ENCODE measurements at regions of chr19 and their contacts with region 1.

Region 1: DNA sequence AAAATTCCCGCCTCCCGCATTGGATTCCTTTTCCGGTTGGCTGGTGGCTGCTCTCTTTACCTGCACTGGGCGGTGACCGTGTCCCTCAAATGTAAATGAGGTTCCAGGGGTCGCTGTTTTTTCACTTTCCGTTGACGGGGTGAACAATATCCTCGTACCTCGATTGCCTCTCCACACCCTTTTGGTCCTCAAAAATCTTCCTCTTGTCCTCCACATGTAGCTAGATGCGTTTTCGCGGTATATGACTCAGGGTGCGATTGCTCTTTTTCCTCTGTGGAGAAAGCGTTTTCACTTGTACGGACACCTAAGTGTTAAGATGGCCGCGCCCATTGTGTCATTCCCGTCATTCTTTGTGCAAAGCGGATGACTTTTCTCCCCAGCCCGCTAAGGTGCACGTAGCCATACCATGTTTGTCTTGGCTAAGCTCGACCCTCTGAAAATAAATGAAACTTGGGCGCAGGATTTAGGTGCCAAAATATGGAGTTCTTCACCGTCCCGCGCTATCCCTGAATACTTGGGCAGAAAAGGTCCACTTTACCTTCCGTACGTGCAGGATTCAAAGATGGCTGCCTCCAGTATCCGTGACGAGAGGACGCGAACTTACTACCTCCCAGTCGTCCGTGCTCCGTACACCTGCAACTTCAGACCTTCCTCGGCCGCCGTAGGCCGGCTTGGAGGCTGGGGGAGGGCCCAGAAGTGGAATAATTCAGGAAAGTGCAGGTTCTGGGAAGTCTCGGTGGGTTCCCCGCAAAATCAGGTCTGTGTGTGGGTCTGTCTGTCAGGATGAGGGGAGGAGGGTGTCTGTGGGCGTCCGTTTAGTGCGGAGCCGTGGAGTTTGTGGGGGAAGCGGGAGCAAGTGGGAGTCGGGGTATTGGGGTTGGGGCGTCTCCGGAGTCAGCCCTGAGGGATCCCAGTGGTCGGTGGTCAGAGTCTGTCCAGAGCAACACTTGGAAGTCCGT is at the start of gene ZNF613:
- DNase-seq: peak; percentile 94
- ATAC-seq: peak; percentile 90
- H3K4me3 ChIP-seq: peak within 1 kb of the TSS; percentile 84
- H3K27ac ChIP-seq: peak within 1 kb of the TSS; percentile 12; the same call in 1 of the 2 replicates
- H3K4me1 ChIP-seq: peaks cover 6% of the 10 kb centered on the region; the same call in 1 of the 2 replicates
- H3K27me3 ChIP-seq: no peaks in the 10 kb centered on the region
- CTCF ChIP-seq: peak; percentile 53
- total RNA-seq, gene ZNF613: 3.1 and 4.3 TPM in 2 replicates

Region 2: DNA sequence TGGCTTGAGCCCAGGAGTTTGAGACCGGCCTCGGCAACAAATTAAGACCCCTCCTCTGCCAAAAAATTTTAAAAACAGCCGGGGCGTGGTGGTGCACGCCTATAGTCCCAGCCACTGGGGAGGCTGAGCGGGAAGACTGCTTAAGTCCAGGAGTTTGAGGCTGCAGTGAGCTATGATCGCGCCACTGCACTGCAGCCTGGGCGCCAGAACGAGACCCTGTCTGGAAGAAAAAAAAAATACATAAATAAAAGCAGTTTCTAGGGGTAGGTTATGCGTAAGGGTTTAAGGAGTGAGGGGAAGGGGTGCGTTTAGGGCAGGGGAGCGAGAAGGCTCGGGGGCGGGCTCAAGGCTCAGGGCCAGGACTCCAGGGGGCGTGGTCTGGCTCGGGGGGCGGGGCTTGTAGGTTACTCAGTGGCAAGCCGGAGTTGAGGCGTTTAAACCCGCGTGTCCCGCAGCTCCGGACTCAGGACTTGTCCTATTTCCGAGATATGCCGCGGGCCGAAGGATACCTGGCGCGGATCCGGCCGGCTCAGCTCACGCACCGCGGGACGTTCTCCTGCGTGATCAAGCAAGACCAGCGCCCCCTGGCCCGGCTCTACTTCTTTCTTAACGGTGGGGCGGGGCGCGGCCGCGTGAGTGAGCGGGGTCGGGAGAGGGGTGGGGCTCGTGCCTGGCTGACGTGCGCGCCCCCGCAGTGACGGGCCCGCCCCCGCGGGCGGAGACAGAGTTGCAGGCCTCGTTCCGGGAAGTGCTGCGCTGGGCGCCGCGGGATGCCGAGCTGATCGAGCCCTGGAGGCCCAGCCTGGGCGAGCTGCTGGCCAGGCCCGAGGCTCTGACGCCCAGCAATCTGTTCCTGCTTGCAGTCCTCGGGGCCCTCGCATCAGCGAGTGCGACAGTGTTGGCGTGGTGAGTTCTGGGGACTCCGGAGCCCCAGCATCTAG is 223.2 kb before region 1 on chr19:
- CTCF ChIA-PET with region 1: no interaction called
- POLR2A ChIA-PET with region 1: no interaction called
- intact Hi-C with region 1: no loop called
- DNase-seq: peak; percentile 94
- ATAC-seq: peak; percentile 82
- H3K4me3 ChIP-seq: peak overlapping the region; percentile 88
- H3K27ac ChIP-seq: peak overlapping the region; percentile 62
- H3K4me1 ChIP-seq: 0 out of 2 replicates have a peak, but pooled peaks cover 9% of the 10 kb centered on the region
- H3K27me3 ChIP-seq: no peaks in the 10 kb centered on the region
- CTCF ChIP-seq: peak; percentile 68

Region 3: DNA sequence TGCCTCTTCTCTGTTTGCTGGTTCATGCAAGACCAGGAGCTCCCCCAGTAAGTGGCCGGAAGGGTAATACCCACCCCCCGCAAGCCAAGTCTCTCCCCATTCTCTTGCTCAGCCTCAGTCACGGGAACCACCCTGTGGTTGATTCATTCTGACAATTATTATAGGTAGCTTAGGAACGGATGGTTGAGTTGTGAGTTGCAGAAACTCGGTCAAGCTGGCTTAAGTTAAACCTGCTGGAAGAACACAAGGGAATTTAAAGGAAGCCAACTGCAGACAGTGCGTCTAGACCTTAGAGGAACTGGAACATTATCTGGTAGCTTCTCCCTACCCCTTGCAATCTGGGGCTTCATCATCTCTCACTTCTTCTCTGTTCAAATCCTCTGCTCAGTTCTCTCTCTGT is 184.3 kb before region 1 on chr19:
- CTCF ChIA-PET with region 1: no interaction called
- POLR2A ChIA-PET with region 1: no interaction called
- intact Hi-C with region 1: no loop called
- DNase-seq: peak; percentile 42
- ATAC-seq: no peak
- H3K4me3 ChIP-seq: no peak overlapping the region
- H3K27ac ChIP-seq: no peak overlapping the region
- H3K4me1 ChIP-seq: no peaks in the 10 kb centered on the region
- H3K27me3 ChIP-seq: peaks cover 11% of the 10 kb centered on the region; the same call in 1 of the 2 replicates
- CTCF ChIP-seq: no peak

Region 4: DNA sequence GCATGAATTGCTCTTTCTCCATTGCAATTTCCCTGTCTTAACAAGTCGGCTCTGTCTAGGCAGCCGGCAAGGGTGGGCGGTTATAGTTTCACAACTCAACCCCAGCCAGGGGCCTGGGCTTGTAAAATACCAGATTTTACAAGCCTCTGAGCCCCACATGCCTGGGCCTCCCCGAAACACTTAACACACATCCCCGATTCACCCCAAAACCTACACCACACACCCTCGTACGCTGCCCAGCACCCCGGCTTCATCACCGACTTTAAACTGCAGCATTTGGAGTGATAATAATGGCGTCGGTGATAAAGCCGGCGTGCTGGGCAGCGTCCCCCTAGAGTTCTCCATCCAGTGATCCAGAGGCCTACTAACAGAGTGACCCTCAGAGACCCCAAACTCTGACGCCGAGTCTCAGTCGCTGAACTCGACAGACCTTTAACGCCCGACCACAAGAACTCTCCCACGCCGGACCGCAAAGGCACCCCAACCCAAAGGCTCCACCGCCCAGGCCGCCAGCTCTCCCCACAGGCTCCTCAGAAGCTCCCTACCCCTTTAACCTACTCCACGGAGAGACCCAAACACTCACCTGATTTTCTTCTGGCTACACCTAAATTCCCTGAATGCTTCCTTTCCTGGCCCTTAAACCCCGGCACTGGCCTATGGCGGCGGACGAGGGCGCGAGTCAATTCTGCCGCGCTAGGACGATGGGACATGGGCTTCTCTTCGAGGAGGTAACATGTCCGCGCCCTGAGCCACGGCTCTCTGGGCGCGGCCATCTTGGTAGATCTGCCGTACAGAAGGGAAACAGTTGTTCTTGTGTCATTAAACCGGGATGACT is 22.5 kb before region 1 on chr19 and contains the start of gene ZNF649:
- CTCF ChIA-PET with region 1: no interaction called
- POLR2A ChIA-PET with region 1: no interaction called
- intact Hi-C with region 1: loop called (anchors 1 kb)
- DNase-seq: peak; percentile 92
- ATAC-seq: peak; percentile 98
- H3K4me3 ChIP-seq: peak within 1 kb of the TSS; percentile 77
- H3K27ac ChIP-seq: no peak within 1 kb of the TSS
- H3K4me1 ChIP-seq: no peaks in the 10 kb centered on the region
- H3K27me3 ChIP-seq: no peaks in the 10 kb centered on the region
- CTCF ChIP-seq: peak; percentile 35; the same call in 1 of the 2 replicates
- total RNA-seq, gene ZNF649: 4.7 and 9.7 TPM in 2 replicates

Region 5: DNA sequence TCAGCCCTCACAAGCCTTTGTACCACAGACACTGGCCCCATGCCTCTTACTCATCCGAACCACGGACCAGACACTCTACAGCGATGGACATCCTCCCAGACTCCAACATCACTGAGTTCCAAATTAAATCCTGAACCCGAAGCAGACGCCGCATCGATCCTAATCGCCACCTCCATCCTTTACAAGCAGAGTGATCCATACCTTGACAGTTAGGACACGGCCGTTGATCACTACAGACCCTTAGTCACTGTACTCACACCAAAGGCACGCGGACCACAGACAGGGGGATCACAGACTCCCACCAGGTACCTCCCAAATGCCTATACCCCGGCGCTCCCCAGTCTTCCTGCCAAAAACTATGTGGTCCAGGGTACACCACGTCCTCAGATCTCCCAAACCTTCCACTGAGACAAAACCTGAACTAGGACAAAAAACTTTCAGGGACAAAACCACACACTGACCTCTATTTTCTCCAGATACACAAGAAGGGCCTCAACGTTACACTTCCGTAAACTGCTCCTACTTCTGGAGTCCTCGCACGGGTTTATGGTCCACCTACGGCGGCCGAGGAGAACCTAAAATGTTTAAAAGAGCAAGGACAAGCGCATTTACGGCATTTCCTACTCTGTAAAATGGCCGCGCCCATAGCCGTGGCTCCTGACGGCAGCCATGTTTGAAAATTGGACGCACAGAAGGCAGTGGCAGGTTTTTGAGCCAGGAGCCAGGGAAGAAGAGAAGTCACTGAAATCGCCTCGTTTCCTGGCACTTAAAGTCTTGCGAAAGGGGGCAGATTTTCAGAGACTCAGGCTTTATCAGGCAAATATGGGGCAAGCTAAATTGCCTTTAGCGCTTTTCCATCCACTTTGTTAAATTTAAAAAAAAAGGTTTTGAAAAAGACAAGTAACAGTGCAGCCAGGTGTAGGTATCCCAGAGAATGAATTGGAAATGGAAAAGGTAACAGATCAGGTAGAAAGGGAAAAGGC is 59.5 kb after region 1 on chr19 and contains the start of gene ZNF350:
- CTCF ChIA-PET with region 1: no interaction called
- POLR2A ChIA-PET with region 1: no interaction called
- intact Hi-C with region 1: loop called (anchors 1 kb)
- DNase-seq: peak; percentile 97
- ATAC-seq: peak; percentile 94
- H3K4me3 ChIP-seq: peak within 1 kb of the TSS; percentile 86
- H3K27ac ChIP-seq: no peak within 1 kb of the TSS
- H3K4me1 ChIP-seq: no peaks in the 10 kb centered on the region
- H3K27me3 ChIP-seq: no peaks in the 10 kb centered on the region
- CTCF ChIP-seq: no peak
- total RNA-seq, gene ZNF350: 5.2 and 6.2 TPM in 2 replicates

Region 6: DNA sequence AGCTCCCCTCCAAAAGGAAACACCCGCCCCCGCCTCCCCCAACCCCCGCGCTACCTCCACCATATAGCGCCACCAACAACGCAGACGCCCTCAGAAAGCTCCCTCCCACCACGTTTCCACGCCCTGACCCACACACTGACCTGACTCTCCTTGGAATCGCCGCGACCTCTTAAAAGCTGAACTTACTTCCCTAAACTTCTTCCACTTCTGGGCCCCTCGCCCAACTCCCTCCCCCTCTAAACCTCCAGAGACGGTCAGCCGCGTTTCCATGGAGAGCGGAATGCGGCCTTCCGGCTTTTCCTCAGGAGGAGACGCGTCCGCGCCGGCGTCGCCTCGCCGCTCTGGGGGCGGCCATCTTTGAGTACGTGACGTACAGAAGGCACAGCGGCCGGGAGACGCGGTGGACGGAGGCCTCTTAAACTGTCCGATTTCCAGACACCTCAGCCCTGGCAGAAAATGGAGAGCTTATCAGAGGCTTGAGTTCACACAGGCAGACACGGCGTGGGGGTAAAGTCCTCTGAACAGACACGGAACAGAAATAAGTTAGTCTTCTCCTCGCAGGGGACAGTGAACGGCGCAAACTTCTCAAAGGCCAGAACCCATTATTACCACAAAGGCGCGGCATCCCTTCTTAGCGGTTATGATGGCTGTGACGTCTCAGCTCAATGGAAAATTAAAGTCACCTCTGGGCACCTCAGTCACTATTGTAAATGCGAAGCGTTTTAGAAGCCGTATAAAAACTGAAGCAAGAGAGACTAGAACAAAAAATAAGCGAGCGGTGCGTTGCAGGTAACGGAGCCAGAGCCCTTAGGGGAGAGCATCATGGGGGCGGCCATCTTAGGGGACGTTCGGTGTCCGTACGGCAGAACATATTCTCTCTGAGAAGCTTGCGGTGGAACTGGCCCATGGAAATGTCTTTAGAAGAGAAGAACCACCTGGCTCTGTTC is 121.8 kb after region 1 on chr19 and contains the start of gene ZNF432:
- CTCF ChIA-PET with region 1: no interaction called
- POLR2A ChIA-PET with region 1: no interaction called
- intact Hi-C with region 1: loop called (anchors 10 kb)
- DNase-seq: peak; percentile 94
- ATAC-seq: peak; percentile 96
- H3K4me3 ChIP-seq: peak within 1 kb of the TSS; percentile 71
- H3K27ac ChIP-seq: peak within 1 kb of the TSS; percentile 45
- H3K4me1 ChIP-seq: peaks cover 3% of the 10 kb centered on the region; the same call in 1 of the 2 replicates
- H3K27me3 ChIP-seq: no peaks in the 10 kb centered on the region
- CTCF ChIP-seq: no peak
- total RNA-seq, gene ZNF432: 4.4 and 6.4 TPM in 2 replicates

Measured in PC-3 (cell line).